ENCODE measurements at regions of chr1 and their contacts with region 1.

Region 1: GRCh38 chr1:3717715-3718601 is 34.3 kb upstream of the CCDC27 start:
- DNase-seq: no peak
- H3K4me3 Mint-ChIP-seq: no peak overlapping the region
- H3K27ac Mint-ChIP-seq: no peak overlapping the region
- H3K4me1 Mint-ChIP-seq: peaks cover 13% of the 10 kb centered on the region
- H3K27me3 Mint-ChIP-seq: no peaks in the 10 kb centered on the region
- CTCF ChIP-seq: no peak

Region 2: GRCh38 chr1:3668585-3669300 is 49.2 kb before region 1 on chr1:
- CTCF ChIA-PET with region 1: interaction called, 3 read pairs
- POLR2A ChIA-PET with region 1: interaction called, 14 read pairs
- intact Hi-C with region 1: no loop called
- DNase-seq: peak; percentile 63
- H3K4me3 Mint-ChIP-seq: peak overlapping the region; percentile 15
- H3K27ac Mint-ChIP-seq: no peak overlapping the region
- H3K4me1 Mint-ChIP-seq: peaks cover 20% of the 10 kb centered on the region
- H3K27me3 Mint-ChIP-seq: no peaks in the 10 kb centered on the region
- CTCF ChIP-seq: no peak

Region 3: DNA sequence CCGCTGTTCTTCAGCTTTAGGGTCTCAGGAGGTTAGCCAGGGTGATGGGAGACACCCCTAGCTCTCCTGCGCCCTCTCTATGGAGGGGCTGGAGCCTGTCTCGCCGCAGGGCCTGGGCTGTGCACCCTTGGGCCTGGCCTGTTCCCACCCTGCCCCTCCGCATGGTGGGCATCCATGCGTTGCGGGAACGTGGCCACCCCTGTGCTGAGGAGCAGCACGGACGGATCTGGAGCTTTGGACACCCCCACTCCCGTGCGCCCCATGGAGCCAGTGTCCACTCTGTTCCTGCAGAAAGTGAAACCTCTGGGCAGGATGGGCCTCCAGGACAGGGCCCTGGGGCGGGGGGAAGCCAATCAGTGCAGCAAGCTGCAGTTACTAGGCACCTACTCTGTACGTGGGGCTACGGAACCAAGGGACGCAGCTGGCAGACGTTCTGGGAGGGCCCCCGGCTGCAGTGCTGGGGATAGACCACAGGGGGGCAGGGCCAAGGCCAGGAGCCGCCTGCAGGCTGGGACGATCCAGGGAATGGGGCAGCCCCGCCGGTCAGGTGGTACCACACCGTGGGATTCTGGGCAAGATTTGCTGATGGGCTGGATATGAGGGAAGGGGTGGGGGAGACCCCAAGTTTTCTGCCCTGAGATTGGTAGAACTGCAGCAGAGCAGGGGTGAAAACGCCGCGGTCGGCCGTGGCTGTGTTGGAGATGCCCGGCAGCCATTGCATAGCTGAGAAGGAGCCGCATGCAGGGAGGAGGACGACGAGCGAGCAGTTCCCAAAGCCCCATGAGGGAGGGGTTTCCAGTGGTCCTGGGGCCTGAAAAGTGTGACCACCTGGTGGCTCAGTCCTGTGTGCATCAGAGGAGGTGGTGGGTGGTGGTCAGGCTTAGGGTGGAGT is 22.4 kb before region 1 on chr1:
- CTCF ChIA-PET with region 1: interaction called, 14 read pairs
- POLR2A ChIA-PET with region 1: interaction called, 8 read pairs
- intact Hi-C with region 1: no loop called
- DNase-seq: peak; percentile 59
- H3K4me3 Mint-ChIP-seq: no peak overlapping the region
- H3K27ac Mint-ChIP-seq: no peak overlapping the region
- H3K4me1 Mint-ChIP-seq: peaks cover 39% of the 10 kb centered on the region
- H3K27me3 Mint-ChIP-seq: no peaks in the 10 kb centered on the region
- CTCF ChIP-seq: peak; percentile 79

Region 4: GRCh38 chr1:3702990-3703728 is 14.8 kb before region 1 on chr1:
- CTCF ChIA-PET with region 1: interaction called, 10 read pairs
- POLR2A ChIA-PET with region 1: interaction called, 72 read pairs
- intact Hi-C with region 1: no loop called
- DNase-seq: peak; percentile 69
- H3K4me3 Mint-ChIP-seq: peak overlapping the region; percentile 46
- H3K27ac Mint-ChIP-seq: peak overlapping the region; percentile 46
- H3K4me1 Mint-ChIP-seq: peaks cover 28% of the 10 kb centered on the region
- H3K27me3 Mint-ChIP-seq: no peaks in the 10 kb centered on the region
- CTCF ChIP-seq: peak; percentile 19

Region 5: GRCh38 chr1:4227986-4228385 is 510.0 kb after region 1 on chr1:
- CTCF ChIA-PET with region 1: no interaction called
- POLR2A ChIA-PET with region 1: no interaction called
- intact Hi-C with region 1: no loop called
- DNase-seq: no peak
- H3K4me3 Mint-ChIP-seq: no peak overlapping the region
- H3K27ac Mint-ChIP-seq: no peak overlapping the region
- H3K4me1 Mint-ChIP-seq: no peaks in the 10 kb centered on the region
- H3K27me3 Mint-ChIP-seq: no peaks in the 10 kb centered on the region
- CTCF ChIP-seq: no peak

Measured in MCF 10A (cell line).